SK-N-SH (cell line): ENCODE measurements at regions of chr9 and their contacts with region 1.

Region 1: DNA sequence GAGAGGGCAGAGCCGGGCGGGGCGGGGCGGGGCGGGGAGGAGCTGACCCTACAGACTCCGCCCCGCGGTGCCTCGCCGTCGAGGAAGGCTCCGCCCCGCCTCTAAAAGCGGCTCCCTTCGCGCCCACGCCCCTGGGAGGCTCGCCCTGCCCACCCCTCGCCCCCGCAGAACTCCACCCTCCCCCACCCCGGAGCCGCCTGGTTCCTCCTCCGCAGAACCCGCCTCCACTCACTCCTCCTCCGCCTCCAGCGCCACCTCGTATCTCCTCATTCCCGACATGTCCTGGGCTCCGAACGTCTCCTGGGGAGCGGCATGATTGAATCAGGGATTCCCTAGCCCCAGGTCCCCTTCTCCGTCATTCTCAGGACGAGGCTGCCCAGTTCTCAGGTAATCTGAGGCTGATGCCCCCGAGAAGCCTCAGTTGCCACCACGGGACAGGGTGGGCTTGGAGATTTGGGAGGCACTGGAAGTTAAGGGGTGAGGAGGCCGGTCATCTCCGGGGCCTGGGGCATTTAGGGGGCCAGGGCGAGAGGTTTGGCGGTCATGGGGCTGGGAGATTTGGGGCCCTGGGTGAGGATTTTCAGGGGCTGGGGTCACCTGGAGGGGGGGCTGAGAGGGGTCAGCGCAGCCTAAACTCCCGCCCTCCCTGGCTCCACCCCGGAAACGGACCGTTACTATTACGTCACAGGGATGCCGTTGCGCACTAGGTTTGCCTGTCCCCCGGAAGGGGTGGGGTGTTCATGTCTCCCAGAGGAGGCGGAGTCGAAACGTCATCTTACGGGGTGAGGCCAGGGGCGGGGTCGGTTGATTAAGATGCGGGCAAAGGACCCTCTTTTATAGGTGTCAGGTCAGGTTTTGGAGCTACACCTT is 3.2 kb upstream of the CCL27 start:
- DNase-seq: peak; percentile 96
- H3K4me3 ChIP-seq: peak overlapping the region; percentile 89 to 100
- H3K27ac ChIP-seq: peak overlapping the region; percentile 95 to 99
- H3K4me1 ChIP-seq: peaks cover 8 to 12% of the 10 kb centered on the region in 2 experiments; a peak in 3 of 4 replicates
- H3K27me3 ChIP-seq: no peaks in the 10 kb centered on the region
- CTCF ChIP-seq: no peak
- EP300 ChIP-seq: no peak; a peak in 1 of 4 replicates
- RAD21 ChIP-seq: no peak

Region 2: GRCh38 chr9:34646211-34647083 is 19.2 kb before region 1 on chr9 and contains the start of gene GALT:
- CTCF ChIA-PET with region 1: interaction called, 49 read pairs
- POLR2A ChIA-PET with region 1: interaction called, 5 read pairs
- DNase-seq: peak; percentile 97
- H3K4me3 ChIP-seq: peak within 1 kb of the TSS; percentile 77 to 84
- H3K27ac ChIP-seq: peak within 1 kb of the TSS; percentile 66 to 95
- H3K4me1 ChIP-seq: peaks cover 3 to 47% of the 10 kb centered on the region in 2 experiments; a peak in 2 of 4 replicates
- H3K27me3 ChIP-seq: no peaks in the 10 kb centered on the region
- CTCF ChIP-seq: peak; percentile 55
- EP300 ChIP-seq: no peak; a peak in 1 of 4 replicates
- RAD21 ChIP-seq: peak; percentile 42
- polyA plus RNA-seq, gene GALT: 45.9 and 49.1 TPM in 2 replicates

Region 3: DNA sequence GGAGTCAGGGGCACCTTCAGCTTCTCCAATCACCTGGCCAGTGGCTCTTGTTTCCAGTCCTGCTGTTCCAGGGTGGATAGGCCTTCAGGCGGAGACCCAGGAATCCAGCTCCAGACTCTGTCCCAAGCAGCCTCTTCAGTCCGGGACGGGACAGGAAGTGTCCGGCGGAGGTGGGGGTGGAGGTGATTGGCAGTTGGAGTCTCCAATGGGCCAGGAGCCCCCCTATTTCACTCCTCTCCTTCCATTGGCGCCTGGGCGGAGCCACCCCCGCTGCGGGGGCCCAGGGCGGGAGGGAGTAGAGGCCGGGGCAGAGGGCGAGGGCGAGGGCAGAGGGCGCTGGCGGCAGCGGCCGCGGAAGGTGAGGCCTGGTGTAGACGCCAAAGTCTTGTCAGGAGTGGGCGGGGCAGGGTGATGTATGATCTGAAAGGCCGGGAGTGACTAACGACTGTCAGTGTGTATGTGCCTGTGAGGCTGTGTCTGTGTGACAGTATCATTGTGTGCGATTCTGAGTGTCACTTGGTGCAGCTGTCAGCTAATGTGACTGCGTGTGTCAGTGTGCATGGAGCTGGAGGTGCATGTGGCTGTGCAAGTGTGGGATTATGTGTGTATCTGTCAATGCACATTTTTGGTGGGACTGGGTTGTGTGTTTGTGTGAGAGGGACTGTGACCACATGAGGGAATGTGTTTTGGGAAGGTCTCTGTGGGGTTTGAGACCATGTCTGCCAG is 13.6 kb before region 1 on chr9 and contains the start of gene IL11RA:
- CTCF ChIA-PET with region 1: interaction called, 49 read pairs
- POLR2A ChIA-PET with region 1: interaction called, 6 read pairs
- DNase-seq: no peak
- H3K4me3 ChIP-seq: no peak within 1 kb of the TSS
- H3K27ac ChIP-seq: peak within 1 kb of the TSS; percentile 67 to 96
- H3K4me1 ChIP-seq: peaks cover 23 to 87% of the 10 kb centered on the region in 2 experiments
- H3K27me3 ChIP-seq: no peaks in the 10 kb centered on the region
- CTCF ChIP-seq: no peak
- EP300 ChIP-seq: no peak
- RAD21 ChIP-seq: no peak
- polyA plus RNA-seq, gene IL11RA: 16.5 and 20.8 TPM in 2 replicates